MCF 10A (cell line): ENCODE measurements at regions of chr18 and their contacts with region 1.

Region 1: GRCh38 chr18:60684843-60685513 is 312.4 kb upstream of the MC4R start:
- DNase-seq: peak; percentile 46
- H3K4me3 Mint-ChIP-seq: no peak overlapping the region
- H3K27ac Mint-ChIP-seq: no peak overlapping the region
- H3K4me1 Mint-ChIP-seq: no peaks in the 10 kb centered on the region
- H3K27me3 Mint-ChIP-seq: peaks cover 63% of the 10 kb centered on the region
- CTCF ChIP-seq: peak; percentile 67

Region 2: DNA sequence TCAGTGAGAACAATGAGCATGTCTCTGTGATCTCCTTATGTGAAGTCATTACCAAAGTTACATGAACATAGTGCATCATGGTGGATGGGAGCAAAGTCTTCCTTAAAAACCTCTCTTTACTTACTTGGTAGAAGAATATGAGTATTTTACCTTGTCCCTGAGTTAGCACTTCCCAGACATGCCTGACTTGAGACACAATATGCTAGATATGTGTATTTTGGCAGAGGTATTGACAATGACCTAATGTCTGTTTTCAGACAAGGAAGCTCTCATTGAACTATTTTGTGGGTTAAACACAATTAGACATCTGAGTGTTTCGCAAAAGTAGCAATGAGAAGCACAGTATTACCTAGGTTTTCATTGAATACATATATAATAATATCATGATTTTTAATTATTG is 213.3 kb before region 1 on chr18:
- CTCF ChIA-PET with region 1: no interaction called
- POLR2A ChIA-PET with region 1: no interaction called
- intact Hi-C with region 1: no loop called
- DNase-seq: no peak
- H3K4me3 Mint-ChIP-seq: no peak overlapping the region
- H3K27ac Mint-ChIP-seq: no peak overlapping the region
- H3K4me1 Mint-ChIP-seq: no peaks in the 10 kb centered on the region
- H3K27me3 Mint-ChIP-seq: peaks cover 96% of the 10 kb centered on the region
- CTCF ChIP-seq: no peak

Region 3: GRCh38 chr18:60668583-60668982 is 16.4 kb before region 1 on chr18:
- CTCF ChIA-PET with region 1: interaction called, 15 read pairs
- POLR2A ChIA-PET with region 1: no interaction called
- intact Hi-C with region 1: no loop called
- DNase-seq: no peak
- H3K4me3 Mint-ChIP-seq: no peak overlapping the region
- H3K27ac Mint-ChIP-seq: no peak overlapping the region
- H3K4me1 Mint-ChIP-seq: no peaks in the 10 kb centered on the region
- H3K27me3 Mint-ChIP-seq: peaks cover 21% of the 10 kb centered on the region
- CTCF ChIP-seq: peak; percentile 36

Region 4: GRCh38 chr18:60809937-60810336 is 125.0 kb after region 1 on chr18:
- CTCF ChIA-PET with region 1: interaction called, 8 read pairs
- POLR2A ChIA-PET with region 1: interaction called, 3 read pairs
- intact Hi-C with region 1: loop called (anchors 2 kb)
- DNase-seq: peak; percentile 29
- H3K4me3 Mint-ChIP-seq: no peak overlapping the region
- H3K27ac Mint-ChIP-seq: no peak overlapping the region
- H3K4me1 Mint-ChIP-seq: peaks cover 16% of the 10 kb centered on the region
- H3K27me3 Mint-ChIP-seq: peaks cover 18% of the 10 kb centered on the region
- CTCF ChIP-seq: no peak

Region 5: DNA sequence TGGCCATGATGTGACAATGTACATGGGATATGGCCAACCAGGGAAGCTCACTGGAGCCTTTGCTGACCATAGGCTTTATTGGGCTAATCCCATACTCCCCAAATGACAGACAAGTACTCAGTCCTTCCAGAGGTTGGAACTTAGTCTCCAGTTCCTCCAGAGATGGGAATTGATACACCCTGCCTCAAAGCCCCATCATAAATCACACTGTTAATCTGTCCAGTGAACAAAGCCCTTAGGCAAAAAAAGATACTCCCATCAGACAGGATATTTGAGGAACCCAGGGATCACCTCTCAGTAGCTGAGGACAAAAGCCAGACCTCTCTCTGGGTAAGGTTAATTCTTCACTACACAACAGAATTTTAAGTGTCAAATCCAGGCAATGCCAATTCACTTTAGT is 400.8 kb after region 1 on chr18:
- CTCF ChIA-PET with region 1: no interaction called
- POLR2A ChIA-PET with region 1: no interaction called
- intact Hi-C with region 1: loop called (anchors 5 kb)
- DNase-seq: no peak
- H3K4me3 Mint-ChIP-seq: no peak overlapping the region
- H3K27ac Mint-ChIP-seq: no peak overlapping the region
- H3K4me1 Mint-ChIP-seq: peaks cover 6% of the 10 kb centered on the region
- H3K27me3 Mint-ChIP-seq: no peaks in the 10 kb centered on the region
- CTCF ChIP-seq: no peak

Region 6: DNA sequence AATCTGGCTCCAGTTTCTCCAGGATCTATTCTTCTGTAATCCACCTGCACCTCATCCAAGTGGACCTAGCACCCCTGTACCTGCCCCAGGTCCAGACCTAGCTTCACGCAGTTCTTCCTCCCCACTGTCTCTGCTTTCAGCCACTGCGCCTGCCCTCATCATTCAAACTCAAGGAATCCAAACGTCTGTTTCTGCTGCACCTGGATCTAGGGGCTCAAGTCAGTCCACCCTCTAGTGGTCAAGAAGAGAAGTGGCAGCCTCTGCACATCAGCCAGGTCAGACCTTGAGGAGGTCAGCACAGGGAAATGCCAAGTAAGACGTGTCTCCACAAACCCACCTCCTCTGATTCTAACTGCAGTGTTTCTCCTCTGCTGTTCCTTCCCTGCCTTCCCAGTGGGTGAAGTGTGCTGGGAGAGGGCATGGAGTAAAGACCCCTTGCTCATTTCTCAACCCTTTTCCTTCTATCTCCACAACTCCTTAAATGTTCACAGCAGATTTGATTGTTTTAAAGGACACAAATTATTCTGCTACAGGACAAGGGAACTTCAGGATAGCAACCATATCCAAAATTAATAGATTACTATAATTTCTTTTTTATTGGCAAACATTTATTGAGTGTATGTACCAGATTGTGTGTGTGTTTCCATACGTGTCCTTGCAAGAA is 1216.5 kb after region 1 on chr18:
- CTCF ChIA-PET with region 1: no interaction called
- POLR2A ChIA-PET with region 1: no interaction called
- intact Hi-C with region 1: loop called (anchors 10 kb)
- DNase-seq: peak; percentile 71
- H3K4me3 Mint-ChIP-seq: no peak overlapping the region
- H3K27ac Mint-ChIP-seq: no peak overlapping the region
- H3K4me1 Mint-ChIP-seq: peaks cover 17% of the 10 kb centered on the region
- H3K27me3 Mint-ChIP-seq: no peaks in the 10 kb centered on the region
- CTCF ChIP-seq: peak; percentile 93